GM18951 (cell line): ENCODE measurements at regions of chr17 and their contacts with region 1.

Region 1: GRCh38 chr17:5438716-5439445 is at the start of gene C1QBP:
- POLR2A ChIP-seq: peak; percentile 89

Region 2: DNA sequence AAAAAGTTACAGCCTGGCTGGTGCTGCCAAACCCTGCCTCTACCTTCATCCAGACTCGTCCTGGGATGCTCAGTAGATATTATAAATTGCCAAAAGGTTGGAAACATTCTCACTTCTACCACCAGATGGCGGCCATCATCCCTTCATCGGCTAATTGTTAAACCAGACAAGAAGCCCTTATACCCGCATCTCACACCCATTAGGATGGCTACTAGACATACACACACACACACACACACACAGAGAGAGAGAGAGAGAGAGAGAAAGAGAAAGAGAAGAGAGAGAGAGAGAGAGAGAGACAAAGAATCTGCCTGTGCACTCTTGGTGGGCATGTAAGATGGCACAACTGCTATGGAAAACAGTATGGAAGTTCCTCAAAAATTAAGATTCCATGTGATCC is 189.3 kb before region 1 on chr17:
- in situ Hi-C with region 1: loop called (anchors 10 kb)
- POLR2A ChIP-seq: no peak

Region 3: DNA sequence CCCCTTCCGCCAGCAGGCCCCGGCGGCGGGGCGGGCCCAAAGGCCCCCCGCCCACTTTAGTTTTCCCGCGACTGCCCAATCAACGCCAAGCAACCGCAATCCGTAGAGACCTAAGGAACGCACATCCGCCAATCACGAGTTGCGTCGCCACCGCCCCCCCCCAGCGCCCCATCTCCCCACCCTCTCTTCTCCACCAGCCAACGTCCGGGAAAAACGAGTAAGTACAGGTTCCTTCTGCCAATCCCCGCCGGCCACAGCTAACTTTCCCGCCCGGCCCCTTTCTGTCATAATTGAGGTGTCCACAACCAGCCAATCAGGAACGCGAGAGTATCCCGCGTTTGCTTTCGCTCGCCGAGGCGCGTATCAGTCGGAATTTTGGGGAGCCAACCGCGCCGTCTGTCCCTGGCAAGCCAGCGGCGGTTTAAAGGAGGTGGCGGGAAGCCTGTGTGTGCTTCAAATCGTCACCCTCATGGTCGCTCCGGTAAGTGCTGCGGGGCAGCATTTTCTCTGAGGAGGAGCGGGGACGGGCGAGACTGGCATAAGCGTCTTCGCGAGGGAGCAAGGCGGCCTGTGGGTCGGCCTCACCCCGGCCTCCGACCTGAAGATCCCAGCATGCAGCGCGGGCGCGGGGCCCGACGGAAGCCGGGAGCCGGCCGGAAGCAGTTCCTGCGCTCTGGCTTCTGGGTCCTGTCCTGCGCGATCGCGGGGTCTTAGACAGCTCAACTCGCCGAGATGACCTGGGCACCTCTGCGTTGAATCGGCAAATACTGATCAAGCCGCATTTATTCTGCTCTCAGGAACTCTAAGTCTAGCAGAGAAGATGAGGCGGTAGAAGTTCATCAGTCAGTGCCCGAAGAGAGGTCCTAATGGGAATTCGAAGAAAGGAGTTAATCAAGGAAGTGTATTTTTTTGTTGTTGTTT is 47.6 kb after region 1 on chr17 and contains the start of gene MIS12:
- in situ Hi-C with region 1: no loop called
- POLR2A ChIP-seq: peak; percentile 90

Region 4: GRCh38 chr17:5580367-5580766 is 141.5 kb after region 1 on chr17:
- in situ Hi-C with region 1: no loop called
- POLR2A ChIP-seq: no peak

Region 5: GRCh38 chr17:5706577-5707216 is 267.8 kb after region 1 on chr17:
- in situ Hi-C with region 1: no loop called
- POLR2A ChIP-seq: no peak